ENCODE measurements at regions of chr22 and their contacts with region 1.

Region 1: GRCh38 chr22:38705235-38706100 is at the start of gene GTPBP1:
- DNase-seq: peak; percentile 88 to 100 (median 95)
- ATAC-seq: peak; percentile 78
- H3K4me3 ChIP-seq: peak within 1 kb of the TSS; percentile 96
- H3K4me3 Mint-ChIP-seq: peak within 1 kb of the TSS; percentile 93
- H3K27ac ChIP-seq: peak within 1 kb of the TSS; percentile 70 to 80
- H3K27ac Mint-ChIP-seq: peak within 1 kb of the TSS; percentile 93
- H3K4me1 ChIP-seq: peaks cover 54% of the 10 kb centered on the region
- H3K4me1 Mint-ChIP-seq: peaks cover 66% of the 10 kb centered on the region
- H3K27me3 ChIP-seq: no peaks in the 10 kb centered on the region
- H3K27me3 Mint-ChIP-seq: peaks cover 5% of the 10 kb centered on the region
- CTCF ChIP-seq: peak; percentile 22
- total RNA-seq, gene GTPBP1: 263 to 272 TPM

Region 2: DNA sequence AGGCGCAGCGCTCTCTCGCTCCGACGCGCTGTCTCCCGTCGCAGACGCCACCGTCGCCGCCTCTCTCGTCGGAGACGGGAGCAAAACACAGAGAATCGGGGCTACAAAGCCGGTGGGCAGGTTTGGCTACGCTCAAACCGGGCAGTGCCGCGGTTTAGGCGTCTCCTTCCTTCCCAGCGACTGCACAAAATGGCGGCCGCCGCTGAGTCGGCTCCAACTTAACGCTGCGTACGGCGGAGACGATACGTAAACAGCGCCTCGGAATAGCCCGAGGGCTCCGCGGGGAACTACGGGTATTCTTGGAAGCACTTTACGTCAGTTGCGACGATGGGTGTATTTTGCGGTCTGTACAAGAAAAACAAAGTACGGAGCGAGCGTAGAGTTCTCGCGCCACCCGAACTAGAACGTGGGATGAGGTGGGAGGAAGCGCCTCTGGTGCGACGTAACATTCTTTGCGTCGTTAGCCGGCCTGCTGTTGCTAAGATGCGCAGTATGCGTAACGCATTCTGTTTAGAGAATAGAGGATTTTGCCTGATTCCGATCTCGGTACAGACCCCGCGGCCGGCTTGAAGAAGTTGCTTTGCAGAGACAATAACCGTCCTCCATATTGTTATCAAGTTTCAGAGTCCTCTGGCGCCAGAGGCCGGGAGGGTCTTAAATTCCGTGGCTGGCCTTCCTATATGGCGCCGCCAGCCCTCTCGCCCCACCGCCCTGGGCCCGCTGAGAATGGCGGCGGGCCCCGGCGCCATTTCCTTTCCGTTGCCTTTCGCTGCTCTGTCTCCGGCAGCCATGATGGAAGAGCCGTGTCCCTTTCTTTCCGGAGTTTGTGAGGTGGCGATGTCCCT is 199.1 kb before region 1 on chr22 and contains the start of gene DDX17:
- CTCF ChIA-PET with region 1: no interaction called
- POLR2A ChIA-PET with region 1: no interaction called
- intact Hi-C with region 1: loop called in 1 of 2 experiments (anchors 1 kb)
- DNase-seq: peak; percentile 90 to 98 (median 94)
- ATAC-seq: peak; percentile 88
- H3K4me3 ChIP-seq: peak within 1 kb of the TSS; percentile 69
- H3K4me3 Mint-ChIP-seq: peak within 1 kb of the TSS; percentile 100
- H3K27ac ChIP-seq: peak within 1 kb of the TSS; percentile 98 to 100
- H3K27ac Mint-ChIP-seq: peak within 1 kb of the TSS; percentile 99
- H3K4me1 ChIP-seq: peaks cover 25% of the 10 kb centered on the region
- H3K4me1 Mint-ChIP-seq: peaks cover 57% of the 10 kb centered on the region
- H3K27me3 ChIP-seq: no peaks in the 10 kb centered on the region
- H3K27me3 Mint-ChIP-seq: no peaks in the 10 kb centered on the region
- CTCF ChIP-seq: no peak
- total RNA-seq, gene DDX17: 454 to 462 TPM

Region 3: GRCh38 chr22:38656256-38657044 is 49.0 kb before region 1 on chr22 and contains the starts of genes CBY1 and FAM227A:
- CTCF ChIA-PET with region 1: no interaction called
- POLR2A ChIA-PET with region 1: interaction called, 6 read pairs
- intact Hi-C with region 1: loop called (anchors 2 kb)
- DNase-seq: peak; percentile 74 to 92 (median 82)
- ATAC-seq: peak; percentile 78
- H3K4me3 ChIP-seq: peak within 1 kb of the TSS; percentile 86
- H3K4me3 Mint-ChIP-seq: peak within 1 kb of the TSS; percentile 97
- H3K27ac ChIP-seq: peak within 1 kb of the TSS; percentile 83 to 94
- H3K27ac Mint-ChIP-seq: peak within 1 kb of the TSS; percentile 98
- H3K4me1 ChIP-seq: peaks cover 19% of the 10 kb centered on the region
- H3K4me1 Mint-ChIP-seq: peaks cover 23% of the 10 kb centered on the region
- H3K27me3 ChIP-seq: no peaks in the 10 kb centered on the region
- H3K27me3 Mint-ChIP-seq: no peaks in the 10 kb centered on the region
- CTCF ChIP-seq: no peak
- total RNA-seq, gene CBY1: 4.6 to 7.6 TPM
- total RNA-seq, gene FAM227A: 0.34 to 0.91 TPM

Region 4: DNA sequence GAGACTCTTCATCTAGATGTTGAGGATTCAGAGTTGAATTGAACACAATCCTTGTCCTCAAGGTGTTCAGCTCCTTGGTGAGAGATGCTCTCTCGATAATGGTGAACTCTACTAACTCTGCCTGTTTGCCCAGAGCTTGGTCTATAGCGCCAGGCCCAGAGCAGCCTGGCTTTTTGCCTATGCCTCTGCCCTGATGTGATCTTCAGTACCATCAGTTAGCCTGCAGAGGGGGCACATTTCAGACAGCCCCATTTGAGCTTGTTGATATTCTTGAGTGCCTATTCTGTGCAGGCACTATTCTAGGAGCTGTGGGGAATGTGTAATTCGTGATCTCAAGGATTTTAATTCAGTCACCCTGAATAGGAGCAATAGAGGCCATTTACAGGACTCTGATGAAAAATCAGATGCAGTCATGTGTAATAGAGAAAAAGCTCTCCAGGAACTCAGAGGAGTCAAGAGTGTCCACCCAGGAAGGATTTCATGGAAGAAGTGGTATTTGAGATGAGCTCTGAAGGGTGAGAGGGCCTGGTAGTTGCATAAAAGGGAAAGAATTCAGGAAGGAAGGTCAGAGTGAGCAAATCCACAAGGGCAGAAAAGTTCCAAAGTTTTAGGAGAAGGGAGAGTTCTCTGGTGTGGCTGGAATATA is 19.6 kb after region 1 on chr22:
- CTCF ChIA-PET with region 1: interaction called, 22 read pairs
- POLR2A ChIA-PET with region 1: interaction called, 97 read pairs
- intact Hi-C with region 1: no loop called
- DNase-seq: peak in 7 of 14 experiments; percentile 22 to 75 (median 53)
- ATAC-seq: peak; percentile 92
- H3K4me3 ChIP-seq: no peak overlapping the region
- H3K4me3 Mint-ChIP-seq: no peak overlapping the region
- H3K27ac ChIP-seq: no peak overlapping the region
- H3K27ac Mint-ChIP-seq: peak overlapping the region; percentile 78
- H3K4me1 ChIP-seq: peaks cover 1% of the 10 kb centered on the region
- H3K4me1 Mint-ChIP-seq: peaks cover 15% of the 10 kb centered on the region
- H3K27me3 ChIP-seq: no peaks in the 10 kb centered on the region
- H3K27me3 Mint-ChIP-seq: no peaks in the 10 kb centered on the region
- CTCF ChIP-seq: peak; percentile 62

Region 5: DNA sequence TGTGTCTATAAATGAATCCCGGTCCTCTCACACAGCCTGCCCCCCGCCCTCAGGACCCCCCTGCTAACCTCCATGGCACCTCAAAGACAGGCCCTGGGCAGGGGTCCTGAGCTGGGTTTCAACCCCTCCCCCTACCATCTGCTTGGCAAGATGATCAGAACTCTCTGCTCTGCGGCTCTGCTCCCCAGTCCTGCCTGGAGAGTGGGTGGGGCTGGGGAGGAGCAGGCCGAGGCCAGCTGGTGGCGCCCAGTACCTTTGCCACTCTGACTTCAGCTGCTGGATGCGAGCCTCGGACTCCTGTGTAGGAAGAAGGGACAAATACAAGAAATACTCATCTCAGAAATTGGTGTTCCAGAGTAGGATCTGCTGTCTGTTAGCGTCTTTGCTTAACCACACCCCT is 35.3 kb after region 1 on chr22:
- CTCF ChIA-PET with region 1: no interaction called
- POLR2A ChIA-PET with region 1: interaction called, 97 read pairs
- intact Hi-C with region 1: no loop called
- DNase-seq: no peak
- ATAC-seq: no peak
- H3K4me3 ChIP-seq: no peak overlapping the region
- H3K4me3 Mint-ChIP-seq: no peak overlapping the region
- H3K27ac ChIP-seq: peak overlapping the region; percentile 41 to 44
- H3K27ac Mint-ChIP-seq: peak overlapping the region; percentile 69
- H3K4me1 ChIP-seq: peaks cover 82% of the 10 kb centered on the region
- H3K4me1 Mint-ChIP-seq: peaks cover 49% of the 10 kb centered on the region
- H3K27me3 ChIP-seq: no peaks in the 10 kb centered on the region
- H3K27me3 Mint-ChIP-seq: no peaks in the 10 kb centered on the region
- CTCF ChIP-seq: no peak

Region 6: DNA sequence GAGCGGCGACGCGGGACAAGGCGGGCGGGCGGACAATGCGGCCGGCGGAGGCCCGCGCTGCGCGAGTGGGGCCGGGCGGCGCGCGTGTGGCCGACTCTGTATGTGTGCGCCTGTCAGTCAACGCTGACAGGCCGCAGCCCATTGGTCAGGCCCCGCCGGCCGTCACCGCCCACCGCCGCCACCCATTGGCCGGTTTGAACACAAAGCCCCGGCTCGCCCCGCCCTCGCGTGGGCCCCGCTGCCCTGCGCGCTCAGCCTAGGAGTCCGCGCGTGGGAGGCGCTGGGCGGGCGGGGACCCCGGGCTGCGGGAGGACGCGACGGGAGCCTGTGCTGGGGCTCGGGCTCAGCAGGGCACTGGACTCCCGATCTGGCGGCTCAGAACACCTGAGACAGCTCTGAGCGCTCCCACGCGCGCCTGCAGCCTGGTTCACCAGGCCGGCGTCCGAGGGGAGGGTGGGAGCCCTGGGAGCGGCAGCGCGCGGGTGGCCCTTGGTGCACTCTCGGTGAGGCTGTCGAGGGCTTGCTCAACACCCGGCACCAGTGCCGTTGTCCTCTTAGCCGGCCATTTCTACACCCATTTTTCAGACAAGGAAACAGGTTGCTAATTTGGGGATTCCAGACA is 50.6 kb after region 1 on chr22 and contains the start of gene SUN2:
- CTCF ChIA-PET with region 1: interaction called, 3 read pairs
- POLR2A ChIA-PET with region 1: interaction called, 56 read pairs
- intact Hi-C with region 1: loop called (anchors 1 to 2 kb)
- DNase-seq: peak; percentile 85 to 96 (median 94)
- ATAC-seq: peak; percentile 63
- H3K4me3 ChIP-seq: peak within 1 kb of the TSS; percentile 98
- H3K4me3 Mint-ChIP-seq: peak within 1 kb of the TSS; percentile 99
- H3K27ac ChIP-seq: peak within 1 kb of the TSS; percentile 75 to 81
- H3K27ac Mint-ChIP-seq: peak within 1 kb of the TSS; percentile 99
- H3K4me1 ChIP-seq: peaks cover 73% of the 10 kb centered on the region
- H3K4me1 Mint-ChIP-seq: peaks cover 69% of the 10 kb centered on the region
- H3K27me3 ChIP-seq: no peaks in the 10 kb centered on the region
- H3K27me3 Mint-ChIP-seq: no peaks in the 10 kb centered on the region
- CTCF ChIP-seq: no peak
- total RNA-seq, gene SUN2: 440 to 453 TPM

Measured in CD4-positive, alpha-beta T cell (primary cell).